Stomach (tissue), 19 donors: ENCODE measurements at regions of chr6 and their contacts with region 1.

Region 1: DNA sequence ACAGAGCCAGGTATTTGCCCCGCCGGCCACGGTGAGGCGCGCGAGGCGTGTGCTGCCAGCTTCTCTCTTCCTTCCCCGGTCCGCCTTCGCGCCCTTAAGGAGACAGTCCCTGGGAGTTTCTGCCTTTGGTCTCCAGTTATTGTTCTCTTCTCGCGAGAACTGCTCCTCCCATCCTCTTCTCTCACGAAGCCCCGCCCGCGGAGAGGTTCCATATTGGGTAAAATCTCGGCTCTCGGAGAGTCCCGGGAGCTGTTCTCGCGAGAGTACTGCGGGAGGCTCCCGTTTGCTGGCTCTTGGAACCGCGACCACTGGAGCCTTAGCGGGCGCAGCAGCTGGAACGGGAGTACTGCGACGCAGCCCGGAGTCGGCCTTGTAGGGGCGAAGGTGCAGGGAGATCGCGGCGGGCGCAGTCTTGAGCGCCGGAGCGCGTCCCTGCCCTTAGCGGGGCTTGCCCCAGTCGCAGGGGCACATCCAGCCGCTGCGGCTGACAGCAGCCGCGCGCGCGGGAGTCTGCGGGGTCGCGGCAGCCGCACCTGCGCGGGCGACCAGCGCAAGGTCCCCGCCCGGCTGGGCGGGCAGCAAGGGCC is at the start of gene MAPK14:
- DNase-seq: peak; percentile 99 to 100
- H3K4me3 ChIP-seq: peak within 1 kb of the TSS; percentile 87 to 100 (median 96)
- H3K27ac ChIP-seq: peak within 1 kb of the TSS; percentile 89 to 96 (median 94)
- H3K4me1 ChIP-seq: peaks cover 23 to 55% (median 34%) of the 10 kb centered on the region in 4 donors
- H3K27me3 ChIP-seq: peaks cover 0 to 22% (median 10%) of the 10 kb centered on the region in 3 donors
- CTCF ChIP-seq: peak in 4 of 7 experiments; percentile 81 to 98 (median 88)
- EP300 ChIP-seq: no peak
- POLR2A ChIP-seq: peak in 2 of 4 donors; percentile 66 to 85
- total RNA-seq, gene MAPK14: 35.6 to 297 (median 57.2) TPM

Region 2: GRCh38 chr6:35904895-35905785 is 122.5 kb before region 1 on chr6:
- intact Hi-C with region 1: no loop called
- DNase-seq: no peak
- H3K4me3 ChIP-seq: no peak overlapping the region
- H3K27ac ChIP-seq: no peak overlapping the region
- H3K4me1 ChIP-seq: no peaks in the 10 kb centered on the region
- H3K27me3 ChIP-seq: no peaks in the 10 kb centered on the region
- CTCF ChIP-seq: no peak
- EP300 ChIP-seq: no peak
- POLR2A ChIP-seq: no peak

Region 3: GRCh38 chr6:36094753-36095496 is 67.3 kb after region 1 on chr6:
- intact Hi-C with region 1: loop called (anchors 5 kb)
- DNase-seq: peak; percentile 90 to 95
- H3K4me3 ChIP-seq: no peak overlapping the region
- H3K27ac ChIP-seq: peak overlapping the region in 4 of 5 donors; percentile 34 to 62 (median 56)
- H3K4me1 ChIP-seq: peaks cover 9 to 51% (median 30%) of the 10 kb centered on the region in 4 donors
- H3K27me3 ChIP-seq: no peaks in the 10 kb centered on the region
- CTCF ChIP-seq: peak in 6 of 7 experiments; percentile 28 to 97 (median 90)
- EP300 ChIP-seq: no peak
- POLR2A ChIP-seq: no peak

Region 4: DNA sequence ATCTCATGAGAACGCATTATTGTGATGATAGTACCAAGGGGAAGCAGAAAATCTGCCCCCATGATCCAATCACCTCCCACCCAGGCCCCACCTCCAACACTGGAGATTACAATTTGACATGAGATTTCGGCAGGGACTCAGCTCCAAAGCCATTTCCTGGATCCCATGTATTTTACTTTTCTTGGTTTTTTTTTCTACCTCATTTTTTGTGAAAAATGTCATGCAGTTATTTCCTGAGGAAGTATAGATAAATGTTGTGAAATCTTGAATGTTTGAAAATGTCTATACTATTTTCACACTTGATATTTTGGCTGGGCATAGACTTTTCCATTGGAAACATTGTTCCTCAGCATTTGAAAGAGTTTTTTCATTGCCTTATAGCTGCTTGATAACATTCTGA is 159.9 kb after region 1 on chr6:
- intact Hi-C with region 1: loop called (anchors 10 kb)
- DNase-seq: no peak
- H3K4me3 ChIP-seq: no peak overlapping the region
- H3K27ac ChIP-seq: no peak overlapping the region
- H3K4me1 ChIP-seq: no peaks in the 10 kb centered on the region
- H3K27me3 ChIP-seq: no peaks in the 10 kb centered on the region
- CTCF ChIP-seq: no peak
- EP300 ChIP-seq: no peak
- POLR2A ChIP-seq: no peak

Region 5: GRCh38 chr6:36463676-36464075 is 436.1 kb after region 1 on chr6:
- intact Hi-C with region 1: no loop called
- DNase-seq: no peak
- H3K4me3 ChIP-seq: no peak overlapping the region
- H3K27ac ChIP-seq: no peak overlapping the region
- H3K4me1 ChIP-seq: peaks cover 4 to 48% (median 21%) of the 10 kb centered on the region in 4 donors
- H3K27me3 ChIP-seq: no peaks in the 10 kb centered on the region
- CTCF ChIP-seq: no peak
- EP300 ChIP-seq: no peak
- POLR2A ChIP-seq: no peak